ENCODE measurements at regions of chr2 and their contacts with region 1.

Region 1: DNA sequence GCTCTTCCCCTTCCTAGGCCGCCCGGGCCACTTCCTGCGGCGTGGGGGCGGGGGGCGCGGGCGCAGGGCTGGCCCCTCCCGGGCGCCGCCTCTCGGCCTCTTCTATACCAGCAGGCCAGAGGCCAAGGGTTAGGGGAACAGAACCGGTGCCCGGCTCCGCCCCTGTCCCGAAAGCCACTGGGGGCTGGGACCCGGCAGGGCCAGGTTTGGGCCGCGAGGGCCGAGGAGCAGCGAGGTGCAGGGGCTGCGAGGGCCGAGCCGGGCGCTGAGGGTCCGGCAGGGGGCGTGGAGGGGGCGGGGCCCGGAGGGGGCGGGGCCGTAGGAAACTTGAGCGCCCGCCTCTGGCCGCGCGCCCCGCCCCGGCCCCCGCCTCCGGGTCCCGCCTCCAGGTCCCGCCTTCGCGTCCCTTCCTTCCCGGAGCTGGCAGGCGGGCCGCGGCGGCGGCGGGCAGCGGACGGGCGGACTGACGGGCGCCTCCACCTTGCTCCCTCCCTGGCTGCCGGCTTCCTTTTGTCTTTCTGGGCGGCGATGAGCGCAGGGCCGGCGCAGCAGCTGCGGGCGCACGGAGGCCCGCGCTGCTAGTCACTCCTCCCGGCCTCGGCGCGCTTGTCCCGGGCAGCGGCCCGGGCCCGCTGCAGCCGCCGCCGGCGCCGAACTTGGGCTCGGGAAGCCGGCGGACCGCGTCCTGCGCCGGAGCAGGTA is at the start of gene HPCAL1:
- DNase-seq: peak; percentile 85 to 96
- H3K4me3 ChIP-seq: peak within 1 kb of the TSS; percentile 92
- H3K27ac ChIP-seq: peak within 1 kb of the TSS; percentile 83
- H3K4me1 ChIP-seq: peaks cover 71% of the 10 kb centered on the region
- H3K27me3 ChIP-seq: no peaks in the 10 kb centered on the region
- CTCF ChIP-seq: peak; percentile 63
- total RNA-seq, gene HPCAL1: 91.1 and 105 TPM in 2 replicates

Region 2: GRCh38 chr2:9535177-9535576 is 767.5 kb before region 1 on chr2:
- CTCF ChIA-PET with region 1: no interaction called
- POLR2A ChIA-PET with region 1: no interaction called
- intact Hi-C with region 1: no loop called
- DNase-seq: no peak
- H3K4me3 ChIP-seq: no peak overlapping the region
- H3K27ac ChIP-seq: no peak overlapping the region
- H3K4me1 ChIP-seq: peaks cover 18% of the 10 kb centered on the region; the same call in 1 of the 2 replicates
- H3K27me3 ChIP-seq: no peaks in the 10 kb centered on the region
- CTCF ChIP-seq: no peak

Region 3: DNA sequence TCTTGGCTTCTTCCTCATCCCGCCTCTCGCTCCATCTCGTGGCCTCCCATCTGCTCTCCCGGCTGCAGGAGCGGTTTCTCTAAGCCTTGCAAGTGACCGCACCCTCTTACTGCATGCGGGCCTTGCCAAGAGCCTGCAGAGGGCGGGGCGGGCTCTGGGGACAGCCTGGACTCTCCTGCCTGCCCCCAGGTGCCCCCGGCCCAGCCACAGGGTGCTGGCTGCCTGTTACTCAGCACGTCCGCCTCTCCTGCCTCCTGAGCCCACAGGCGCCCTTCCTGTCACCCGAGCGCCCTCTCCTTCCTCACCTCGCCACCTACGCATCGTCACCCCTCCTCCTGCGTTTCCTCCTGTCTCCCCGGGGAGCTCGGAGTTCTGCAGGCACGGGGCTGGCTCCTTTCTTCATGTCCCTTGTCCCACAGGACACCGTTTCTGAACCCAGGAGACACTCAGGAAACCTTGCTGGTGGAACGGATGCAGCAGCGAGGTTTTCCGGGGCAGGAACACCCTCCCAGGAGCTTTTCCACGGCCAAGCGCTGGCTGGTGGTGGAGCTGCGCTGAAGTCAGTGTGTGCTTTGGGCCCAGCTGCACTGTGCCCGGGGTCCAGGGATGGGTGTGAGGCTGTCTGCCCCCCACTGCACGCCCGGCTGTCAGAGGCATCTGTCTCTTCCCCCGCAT is 28.5 kb after region 1 on chr2:
- CTCF ChIA-PET with region 1: interaction called, 18 read pairs
- POLR2A ChIA-PET with region 1: interaction called, 6 read pairs
- intact Hi-C with region 1: loop called (anchors 2 kb)
- DNase-seq: peak in 1 of 2 experiments; percentile 93
- H3K4me3 ChIP-seq: no peak overlapping the region
- H3K27ac ChIP-seq: no peak overlapping the region
- H3K4me1 ChIP-seq: peaks cover 17% of the 10 kb centered on the region
- H3K27me3 ChIP-seq: no peaks in the 10 kb centered on the region
- CTCF ChIP-seq: no peak

Measured in PC-9 (cell line).